ENCODE measurements at regions of chrX and their contacts with region 1.

Region 1: DNA sequence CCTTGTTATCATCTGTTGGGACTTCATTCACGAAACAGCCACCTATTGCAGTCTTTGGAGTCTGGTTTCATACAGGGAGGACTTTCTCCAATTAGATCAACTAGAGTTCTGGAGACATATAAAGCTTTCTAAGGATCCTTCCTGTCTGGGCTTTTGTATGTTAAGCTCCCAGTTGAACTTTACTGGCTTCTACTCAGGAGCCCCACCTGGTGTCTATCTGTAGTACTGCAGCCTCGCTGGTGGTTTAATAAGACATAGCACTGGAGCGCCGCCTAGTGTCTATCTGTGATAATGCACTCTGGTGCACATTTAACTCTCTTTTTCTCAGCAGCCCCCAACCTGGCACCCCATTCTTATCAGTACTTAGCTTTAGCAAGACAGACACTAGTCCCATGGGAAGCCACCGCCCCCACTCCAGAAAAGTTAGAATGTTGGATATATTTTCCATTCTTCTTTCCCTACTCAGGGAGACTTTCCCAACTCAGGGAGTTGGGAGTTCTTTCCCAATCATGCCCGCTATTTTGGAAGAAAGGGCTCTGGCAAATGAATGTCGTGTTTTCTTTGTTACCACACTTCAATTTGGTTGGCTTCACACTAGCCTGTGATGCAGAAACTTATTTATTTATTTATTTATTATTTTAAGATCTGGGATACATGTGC is 36.9 kb upstream of the SYTL4 start:
- DNase-seq: peak; percentile 84

Region 2: DNA sequence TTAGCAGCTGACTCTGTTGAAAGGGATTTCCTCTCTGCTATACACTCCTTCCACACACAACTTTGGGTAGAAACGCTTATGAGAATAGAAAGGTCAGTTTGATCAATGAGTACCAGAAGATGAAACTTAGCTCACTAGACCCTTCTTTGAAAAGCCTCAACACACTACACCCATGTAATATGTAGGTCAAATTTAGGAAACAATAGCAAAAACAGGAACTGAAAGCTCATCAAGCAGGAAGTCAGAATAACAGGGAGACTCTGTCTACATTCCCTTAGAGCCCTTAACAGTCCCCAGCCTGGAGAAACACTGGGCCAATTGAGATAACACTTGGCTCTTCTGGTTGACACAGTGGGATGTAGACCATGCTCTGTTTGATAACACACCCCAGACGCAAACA is 94.1 kb before region 1 on chrX:
- CTCF ChIA-PET with region 1: interaction called, 46 read pairs
- POLR2A ChIA-PET with region 1: no interaction called
- DNase-seq: no peak

Region 3: GRCh38 chrX:100685284-100685996 is 83.4 kb before region 1 on chrX:
- CTCF ChIA-PET with region 1: interaction called, 83 read pairs
- POLR2A ChIA-PET with region 1: no interaction called
- DNase-seq: peak; percentile 84

Region 4: DNA sequence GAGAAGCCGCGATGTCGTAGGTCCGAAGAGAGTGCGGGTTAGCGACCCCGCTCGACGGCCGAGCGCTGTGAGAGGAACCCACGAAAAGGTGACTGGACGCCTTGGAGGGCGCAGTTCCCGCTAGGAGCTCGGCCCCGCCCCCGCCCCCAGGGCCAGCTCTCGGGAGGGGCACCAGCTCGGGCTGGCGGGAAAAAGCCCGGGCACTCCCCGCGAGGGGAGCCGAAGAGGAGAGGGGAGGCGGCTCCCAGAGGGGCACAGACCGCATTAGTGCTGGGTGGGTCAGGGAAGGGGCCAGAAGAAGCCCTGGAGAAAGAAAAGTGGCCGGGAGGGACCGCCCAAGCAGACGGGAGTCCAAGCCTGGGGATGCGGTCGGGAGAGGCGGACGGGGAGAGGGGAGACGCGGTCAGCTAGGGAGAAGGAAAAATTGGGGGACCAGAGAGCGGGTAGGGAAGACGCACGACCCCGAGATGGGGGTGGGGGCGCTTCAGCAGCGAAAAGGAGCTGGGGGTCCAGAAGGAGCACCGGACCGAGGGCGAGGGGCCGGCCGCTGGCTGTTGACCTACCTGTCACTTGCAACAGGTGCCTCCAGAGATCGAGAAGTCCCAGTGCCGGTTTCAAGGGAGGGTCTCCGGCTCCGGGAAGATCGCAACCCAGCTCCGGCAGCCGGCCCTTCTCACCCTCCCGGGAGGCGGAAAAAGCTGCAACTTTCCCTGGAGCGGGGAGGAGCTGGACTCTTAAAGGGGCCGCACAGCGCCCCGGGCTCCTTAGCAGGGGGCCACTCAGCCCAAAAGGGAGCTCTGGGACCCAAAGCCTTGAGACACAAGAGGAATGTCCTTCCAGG is 37.1 kb before region 1 on chrX and contains the start of gene SYTL4:
- CTCF ChIA-PET with region 1: interaction called, 10 read pairs
- POLR2A ChIA-PET with region 1: no interaction called
- DNase-seq: peak; percentile 65

Region 5: DNA sequence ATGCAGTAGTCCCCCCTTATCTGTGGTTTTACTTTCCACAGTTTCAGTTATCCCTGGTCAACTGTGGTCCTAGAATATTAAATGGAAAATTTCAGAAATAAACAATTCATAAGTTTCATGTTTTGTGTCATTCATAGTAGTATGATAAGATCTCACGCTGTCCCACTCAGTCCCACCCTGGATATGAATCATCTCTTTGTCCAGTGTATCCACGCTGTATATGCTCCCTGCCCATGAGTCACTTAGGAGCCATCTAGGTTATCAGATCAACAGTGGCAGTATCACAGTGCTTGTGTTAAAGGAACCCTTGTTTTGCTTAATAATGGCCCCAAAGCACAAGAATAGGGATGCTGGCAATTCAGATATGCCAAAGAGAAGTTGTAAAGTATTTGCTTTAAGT is 20.7 kb before region 1 on chrX:
- CTCF ChIA-PET with region 1: interaction called, 11 read pairs
- POLR2A ChIA-PET with region 1: no interaction called
- DNase-seq: no peak

Region 6: DNA sequence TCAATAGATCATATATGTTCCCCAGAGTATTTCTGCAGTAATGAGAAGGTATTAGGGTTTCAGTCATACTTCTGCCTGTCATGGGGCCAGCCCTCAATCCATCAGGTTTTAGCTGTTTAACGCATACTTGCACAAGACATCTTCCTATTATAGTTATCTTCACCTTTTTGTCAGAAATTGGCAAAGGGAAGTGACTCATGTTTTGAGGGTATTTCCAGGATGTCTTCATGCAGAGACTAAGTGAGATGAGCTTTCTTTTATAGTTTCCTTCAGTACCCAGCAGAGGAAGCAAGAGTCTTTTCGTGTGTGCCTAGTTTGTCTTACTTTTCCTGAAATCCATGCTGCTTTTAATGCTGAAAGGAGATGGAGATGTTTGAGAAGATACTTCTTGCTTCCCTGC is 60.9 kb after region 1 on chrX:
- CTCF ChIA-PET with region 1: no interaction called
- POLR2A ChIA-PET with region 1: no interaction called
- DNase-seq: no peak